Left colon (tissue), 2 donors: ENCODE measurements at regions of chr17 and their contacts with region 1.

Region 1: DNA sequence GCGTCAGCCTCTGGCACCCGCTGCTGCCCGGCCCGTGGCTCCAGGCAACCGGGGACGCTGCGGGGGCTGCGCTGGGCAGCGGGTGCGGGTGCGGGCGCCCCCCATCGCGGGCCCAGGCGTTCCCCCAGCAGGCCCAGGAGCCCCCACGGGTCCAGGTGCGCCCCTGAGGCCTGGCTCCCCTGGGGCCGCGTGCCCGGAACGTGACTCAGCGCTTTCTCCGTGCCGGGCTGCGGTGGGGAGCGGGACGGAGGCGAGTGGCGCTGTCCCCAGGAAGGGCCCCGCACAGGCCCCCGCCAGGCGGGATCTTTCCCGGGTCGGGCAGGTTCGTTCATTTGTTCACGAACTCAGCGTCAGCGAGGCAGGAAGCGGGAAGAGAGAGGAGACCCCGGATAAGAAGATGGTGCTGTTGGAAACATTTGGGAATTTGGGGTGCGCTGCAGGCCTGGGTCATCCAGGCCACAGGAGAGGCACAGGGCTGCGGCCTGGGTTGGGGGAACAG is 18.4 kb upstream of the EXOC7 start:
- DNase-seq: no peak
- ATAC-seq: no peak

Region 2: DNA sequence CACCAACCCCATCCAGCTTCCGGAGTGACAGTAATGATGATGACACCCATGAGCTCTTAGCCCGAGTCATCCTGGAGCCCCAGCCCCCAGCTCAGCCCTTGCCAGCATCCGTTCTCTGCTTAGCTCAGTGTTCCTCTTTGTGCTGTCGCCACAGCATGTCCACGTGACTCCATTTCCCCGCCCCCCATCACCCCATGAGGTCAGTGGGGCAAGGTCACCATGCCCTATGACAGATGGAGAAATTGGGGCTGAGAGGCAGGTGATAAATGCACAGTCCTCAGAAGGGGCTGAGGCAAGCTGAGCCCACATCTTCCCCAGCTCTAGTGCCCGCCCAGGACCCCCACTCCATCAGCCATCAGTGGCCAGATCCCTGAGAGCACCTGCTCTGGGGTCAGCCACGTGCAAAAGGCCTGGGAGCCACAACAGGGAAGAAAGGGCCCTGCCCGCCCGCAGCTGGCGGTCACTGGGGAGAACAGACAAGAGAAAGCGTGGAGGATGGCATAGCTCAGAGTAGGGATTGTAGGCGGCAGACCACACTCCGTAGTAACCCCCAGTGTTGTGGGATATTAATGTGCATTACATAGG is 383.7 kb before region 1 on chr17:
- intact Hi-C with region 1: no loop called
- DNase-seq: no peak
- ATAC-seq: no peak

Region 3: GRCh38 chr17:76063875-76064546 is 58.0 kb before region 1 on chr17:
- intact Hi-C with region 1: no loop called
- DNase-seq: no peak
- ATAC-seq: no peak

Region 4: GRCh38 chr17:76182016-76182764 is 60.2 kb after region 1 on chr17:
- intact Hi-C with region 1: loop called in 1 of 2 experiments (anchors 5 kb)
- DNase-seq: peak; percentile 82 to 94
- ATAC-seq: peak; percentile 93

Region 5: DNA sequence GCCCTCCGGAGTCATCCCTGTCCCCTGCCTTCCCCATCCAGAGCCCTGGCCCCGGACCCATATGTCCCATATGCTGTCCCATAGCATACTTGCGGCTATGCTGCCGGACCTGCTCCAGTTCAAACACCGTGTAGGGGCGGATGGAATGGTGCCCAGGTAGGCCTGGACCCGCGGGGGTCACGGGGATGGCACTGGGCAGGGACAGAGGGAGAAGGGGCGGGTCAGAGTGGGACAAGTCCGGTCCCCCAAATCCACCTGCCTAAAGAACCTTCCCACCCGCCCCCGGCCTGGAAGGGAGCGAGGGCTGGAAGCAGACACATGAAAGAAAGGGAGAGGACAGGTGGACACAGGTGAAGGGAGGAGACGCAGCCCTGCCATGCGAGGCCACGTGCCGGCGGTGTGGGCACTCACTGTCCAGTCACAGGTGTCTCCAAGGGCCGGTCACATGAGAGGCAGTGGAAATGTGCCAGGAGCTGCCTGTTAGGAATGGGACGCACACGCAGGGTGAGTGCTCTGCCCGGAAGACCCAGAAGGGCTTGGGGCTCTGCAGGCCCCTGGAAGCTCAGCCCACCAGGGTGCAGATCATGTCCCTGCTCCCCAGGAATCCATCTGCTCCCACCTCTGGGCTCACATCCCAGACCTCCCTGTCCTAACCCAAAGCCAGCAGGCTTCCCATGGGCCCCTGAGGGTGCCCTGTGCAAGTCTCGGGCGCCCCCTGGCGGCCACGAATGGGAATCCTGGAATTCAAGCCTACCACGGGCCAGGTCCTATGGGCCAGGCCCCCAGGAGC is 157.2 kb after region 1 on chr17:
- intact Hi-C with region 1: loop called (anchors 2 to 10 kb)
- DNase-seq: peak; percentile 78 to 92
- ATAC-seq: peak; percentile 87

Region 6: GRCh38 chr17:76397687-76398487 is 275.9 kb after region 1 on chr17:
- intact Hi-C with region 1: loop called in 1 of 2 experiments (anchors 10 kb)
- DNase-seq: peak; percentile 79 to 93
- ATAC-seq: peak; percentile 86